ENCODE measurements at regions of chr12 and their contacts with region 1.

Region 1: DNA sequence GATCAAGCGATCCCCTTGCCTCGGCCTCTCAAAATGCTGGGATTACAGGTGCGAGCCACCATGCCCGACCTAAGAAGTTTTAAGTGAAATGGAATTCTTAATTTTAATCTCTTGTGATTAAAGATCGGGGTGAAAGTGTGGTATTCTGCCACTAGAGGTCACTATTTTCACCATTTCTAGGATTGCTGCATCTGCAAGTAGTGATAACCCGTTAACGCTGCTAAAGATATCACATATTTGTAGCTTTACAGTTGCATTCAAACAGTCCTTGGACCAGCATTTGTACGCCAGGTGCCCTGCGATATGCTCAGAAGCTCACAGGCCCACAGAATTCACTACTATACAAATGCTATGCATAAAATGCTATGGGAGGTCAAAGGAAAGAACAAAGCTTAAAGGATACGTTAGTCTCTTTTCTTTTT is 19.3 kb downstream of the CCDC62 start:
- DNase-seq: no peak
- H3K4me3 ChIP-seq: peak overlapping the region in 8 of 59 donors; percentile 15 to 44 (median 25)
- H3K27ac ChIP-seq: peak overlapping the region in 16 of 59 donors; percentile 1 to 78 (median 24)
- H3K27me3 ChIP-seq: no peaks in the 10 kb centered on the region
- CTCF ChIP-seq: peak; percentile 61 to 93 (median 83)

Region 2: GRCh38 chr12:122459211-122459610 is 334.5 kb before region 1 on chr12:
- intact Hi-C with region 1: no loop called
- DNase-seq: peak in 1 of 10 donors; percentile 54
- H3K4me3 ChIP-seq: no peak overlapping the region
- H3K27ac ChIP-seq: no peak overlapping the region
- H3K27me3 ChIP-seq: no peaks in the 10 kb centered on the region
- CTCF ChIP-seq: no peak

Region 3: GRCh38 chr12:122836027-122836921 is 42.6 kb after region 1 on chr12:
- intact Hi-C with region 1: loop called in 1 of 2 experiments (anchors 5 kb)
- DNase-seq: peak in 3 of 10 donors; percentile 42 to 54 (median 49)
- H3K4me3 ChIP-seq: peak overlapping the region; percentile 51 to 85 (median 74)
- H3K27ac ChIP-seq: peak overlapping the region in 57 of 59 donors; percentile 48 to 100 (median 99)
- H3K27me3 ChIP-seq: no peaks in the 10 kb centered on the region
- CTCF ChIP-seq: no peak

Region 4: GRCh38 chr12:122851820-122852219 is 58.1 kb after region 1 on chr12:
- intact Hi-C with region 1: loop called (anchors 2 to 10 kb)
- DNase-seq: peak in 3 of 10 donors; percentile 36 to 65 (median 58)
- H3K4me3 ChIP-seq: peak overlapping the region in 4 of 59 donors; percentile 8 to 27 (median 13)
- H3K27ac ChIP-seq: peak overlapping the region; percentile 77 to 99 (median 95)
- H3K27me3 ChIP-seq: no peaks in the 10 kb centered on the region
- CTCF ChIP-seq: no peak

Region 5: GRCh38 chr12:122860346-122861090 is 66.8 kb after region 1 on chr12:
- intact Hi-C with region 1: loop called (anchors 2 to 10 kb)
- DNase-seq: peak; percentile 85 to 91 (median 86)
- H3K4me3 ChIP-seq: no peak overlapping the region
- H3K27ac ChIP-seq: peak overlapping the region; percentile 30 to 99 (median 86)
- H3K27me3 ChIP-seq: no peaks in the 10 kb centered on the region
- CTCF ChIP-seq: peak; percentile 77 to 97 (median 92)